K562 (cell line): ENCODE measurements at regions of chr10 and their contacts with region 1.

Region 1: DNA sequence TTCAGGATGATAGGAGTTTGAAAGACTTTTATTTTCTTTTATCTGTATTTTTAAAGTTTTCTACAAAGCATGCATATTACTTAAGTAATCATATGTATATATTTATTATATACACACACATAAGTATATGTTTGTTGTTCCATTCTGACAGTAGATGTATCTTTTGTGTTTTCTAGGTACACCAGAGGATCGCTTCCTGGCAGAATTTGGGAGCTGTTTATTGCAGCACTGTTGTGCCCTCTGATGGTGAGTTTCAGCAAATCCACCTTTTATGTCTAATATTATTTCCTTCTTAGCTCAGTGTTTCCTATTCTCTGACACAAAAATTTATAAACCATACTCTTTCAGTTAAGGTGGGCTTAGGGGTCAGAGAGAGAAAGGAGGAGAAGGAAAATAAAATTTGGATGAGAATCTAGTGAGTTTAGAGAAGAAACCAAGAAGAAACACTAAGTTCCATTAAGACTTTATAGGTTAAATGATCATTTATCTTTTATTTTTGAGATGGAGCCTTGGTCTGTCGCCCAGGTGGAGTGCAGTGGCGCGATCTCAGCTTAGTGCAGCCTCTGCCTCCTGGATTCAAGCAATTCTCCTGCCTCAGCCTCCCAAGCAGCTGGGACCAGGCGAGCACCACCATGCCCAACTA is 59.2 kb upstream of the OIT3 start:
- DNase-seq: peak; percentile 17 to 78 (median 40)
- ATAC-seq: peak; percentile 85
- H3K4me3 ChIP-seq: no peak overlapping the region
- H3K27ac ChIP-seq: no peak overlapping the region
- H3K4me1 ChIP-seq: peaks cover 5 to 8% of the 10 kb centered on the region in 2 experiments; a peak in 4 of 5 replicates
- H3K27me3 ChIP-seq: no peaks in the 10 kb centered on the region
- CTCF ChIP-seq: peak; percentile 69 to 92 (median 74)
- EP300 ChIP-seq: no peak
- POLR2A ChIP-seq: no peak
- RAD21 ChIP-seq: peak; percentile 93 to 97

Region 2: DNA sequence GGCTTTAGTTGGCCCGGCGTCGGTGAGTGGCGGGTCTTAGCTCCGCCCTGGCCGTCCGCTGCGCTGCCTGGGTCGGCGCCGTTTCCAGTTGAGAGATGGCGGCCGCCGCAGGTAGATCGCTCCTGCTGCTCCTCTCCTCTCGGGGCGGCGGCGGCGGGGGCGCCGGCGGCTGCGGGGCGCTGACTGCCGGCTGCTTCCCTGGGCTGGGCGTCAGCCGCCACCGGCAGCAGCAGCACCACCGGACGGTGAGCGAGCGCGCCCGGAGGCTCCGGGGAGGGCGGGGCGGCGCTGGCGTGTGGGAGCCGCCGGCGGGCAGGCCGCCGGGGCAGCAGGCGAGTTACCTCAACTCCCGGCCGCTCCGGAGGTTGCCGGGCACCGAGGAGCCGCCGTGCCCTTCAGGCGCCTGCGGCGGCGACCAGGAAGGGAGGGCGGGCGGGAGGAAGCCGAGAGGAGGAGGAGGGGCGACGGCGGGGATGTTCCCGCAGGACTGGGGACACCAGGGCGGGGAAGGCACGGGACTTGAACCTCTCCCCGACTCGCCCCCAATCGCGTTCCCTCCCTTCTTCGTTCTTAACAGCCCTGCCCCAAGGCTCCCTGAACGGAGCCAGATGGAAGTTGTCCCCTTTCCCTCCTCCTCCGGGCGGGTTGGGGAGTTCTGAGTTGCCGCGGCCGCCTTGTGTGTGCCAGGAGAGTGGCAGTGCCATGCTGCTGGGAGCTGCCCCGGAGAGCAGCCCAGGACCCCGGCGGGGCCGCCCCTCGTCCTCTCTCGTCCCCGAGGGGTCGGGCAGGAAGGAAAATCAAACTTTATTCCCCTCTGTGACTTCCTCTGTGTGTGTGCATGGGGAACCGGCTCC is 142.0 kb before region 1 on chr10 and contains the start of gene MCU:
- CTCF ChIA-PET with region 1: interaction called, 6 read pairs
- POLR2A ChIA-PET with region 1: interaction called, 5 read pairs
- in situ Hi-C with region 1: no loop called
- intact Hi-C with region 1: loop called (anchors 5 kb)
- DNase-seq: peak; percentile 95 to 98 (median 96)
- ATAC-seq: peak; percentile 98
- H3K4me3 ChIP-seq: peak within 1 kb of the TSS; percentile 71
- H3K27ac ChIP-seq: peak within 1 kb of the TSS; percentile 72
- H3K4me1 ChIP-seq: peaks cover 25 to 44% of the 10 kb centered on the region in 2 experiments
- H3K27me3 ChIP-seq: no peaks in the 10 kb centered on the region
- CTCF ChIP-seq: no peak
- EP300 ChIP-seq: no peak
- POLR2A ChIP-seq: peak; percentile 86
- RAD21 ChIP-seq: peak in 1 of 2 experiments; percentile 24; a peak in 1 of 4 replicates
- polyA plus RNA-seq, gene MCU: 8.2 to 11.1 TPM

Region 3: DNA sequence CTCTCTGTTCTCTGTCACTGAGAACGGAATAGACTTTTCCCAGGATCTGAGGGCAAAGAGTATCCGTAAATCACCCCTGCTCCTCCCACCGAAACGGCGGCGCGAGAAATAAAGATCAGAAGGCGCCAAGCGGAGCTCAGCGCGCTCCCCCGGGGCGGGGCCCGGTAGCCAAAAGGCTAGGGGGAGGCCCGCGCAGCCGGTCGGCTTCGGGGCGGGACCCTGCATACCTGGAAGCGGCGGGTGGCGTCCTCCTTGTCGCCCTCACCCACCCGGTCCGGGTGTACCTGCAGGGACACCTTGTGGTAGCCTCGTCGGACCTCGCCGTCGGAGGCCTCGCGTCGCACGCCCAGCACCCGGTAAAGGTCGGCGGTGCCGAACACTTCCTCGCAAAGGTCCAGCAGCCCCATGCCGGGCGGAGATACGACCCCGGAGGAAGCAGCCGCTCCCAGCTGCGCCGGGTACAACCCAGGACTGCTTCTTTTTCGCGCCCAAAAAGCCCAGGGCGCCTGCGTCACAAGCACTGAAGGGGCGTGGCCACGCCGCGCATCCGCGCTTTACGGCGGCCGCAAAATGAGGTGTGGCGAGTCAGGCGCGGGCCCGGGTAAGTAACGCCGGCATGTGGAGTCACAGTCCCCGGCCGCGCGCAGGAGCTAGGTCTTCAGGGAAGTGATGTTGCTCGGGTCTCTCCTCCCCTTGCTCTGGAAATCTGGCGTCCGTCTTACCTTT is 412.6 kb after region 1 on chr10 and contains the start of gene DNAJC9:
- CTCF ChIA-PET with region 1: no interaction called
- POLR2A ChIA-PET with region 1: no interaction called
- in situ Hi-C with region 1: no loop called
- intact Hi-C with region 1: no loop called
- DNase-seq: peak; percentile 93 to 99 (median 94)
- ATAC-seq: peak; percentile 87
- H3K4me3 ChIP-seq: peak within 1 kb of the TSS; percentile 65
- H3K27ac ChIP-seq: peak within 1 kb of the TSS; percentile 95
- H3K4me1 ChIP-seq: peaks cover 7 to 43% of the 10 kb centered on the region in 2 experiments
- H3K27me3 ChIP-seq: no peaks in the 10 kb centered on the region
- CTCF ChIP-seq: peak in 1 of 3 experiments; percentile 15; a peak in 3 of 6 replicates
- EP300 ChIP-seq: peak; percentile 46
- POLR2A ChIP-seq: peak; percentile 99
- RAD21 ChIP-seq: peak in 1 of 2 experiments; percentile 3; a peak in 3 of 4 replicates
- polyA plus RNA-seq, gene DNAJC9: 66.7 to 80.2 TPM